ENCODE measurements at regions of chr10 and their contacts with region 1.

Region 1: DNA sequence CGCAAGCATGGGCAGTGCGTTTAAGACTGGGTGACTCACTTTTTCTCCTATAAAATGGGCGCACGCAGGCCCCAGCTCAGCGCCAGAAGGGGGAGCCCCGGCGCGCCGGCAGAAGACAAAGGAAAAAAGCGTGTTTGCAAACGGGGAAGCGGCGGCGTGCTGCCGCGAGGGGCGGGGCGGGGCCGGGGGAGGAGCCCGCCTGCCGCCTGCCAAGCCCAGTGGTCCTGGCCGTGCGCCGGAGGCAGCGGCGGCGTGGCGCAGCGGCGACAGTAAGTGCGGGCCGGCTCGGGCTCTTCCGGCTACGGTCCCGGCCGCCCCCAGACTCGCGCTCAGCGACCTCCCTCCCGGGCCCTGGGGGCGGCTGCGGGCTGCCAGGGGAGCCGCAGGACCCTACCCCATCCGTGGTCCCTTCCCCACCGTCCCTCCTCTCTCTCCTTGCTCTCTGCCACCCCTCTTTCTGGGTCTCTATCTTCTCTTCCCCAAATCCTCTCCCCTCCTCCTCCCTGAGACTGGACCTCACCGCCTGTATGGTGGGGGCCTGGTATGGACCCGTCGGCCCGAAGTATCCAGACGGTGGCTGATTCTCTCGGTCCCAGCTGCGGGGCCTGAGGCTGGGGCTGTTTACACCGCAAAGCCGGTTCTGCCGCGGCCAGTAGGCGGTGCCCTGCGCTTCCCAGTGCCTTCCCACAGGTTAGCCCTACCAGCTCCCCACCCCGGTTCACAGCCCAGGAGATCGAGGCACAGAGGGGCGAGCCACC is at the start of gene SLC29A3:
- DNase-seq: peak; percentile 69 to 92 (median 80)
- ATAC-seq: peak; percentile 87
- H3K4me3 ChIP-seq: peak within 1 kb of the TSS; percentile 83 to 91
- H3K4me3 Mint-ChIP-seq: peak within 1 kb of the TSS; percentile 92
- H3K27ac ChIP-seq: peak within 1 kb of the TSS; percentile 58 to 61
- H3K27ac Mint-ChIP-seq: peak within 1 kb of the TSS; percentile 80
- H3K4me1 ChIP-seq: peaks cover 18% of the 10 kb centered on the region
- H3K4me1 Mint-ChIP-seq: peaks cover 45% of the 10 kb centered on the region
- H3K27me3 ChIP-seq: no peaks in the 10 kb centered on the region
- H3K27me3 Mint-ChIP-seq: no peaks in the 10 kb centered on the region
- CTCF ChIP-seq: peak; percentile 38
- total RNA-seq, gene SLC29A3: 1.4 to 2.9 TPM

Region 2: GRCh38 chr10:71302874-71303568 is 16.2 kb before region 1 on chr10:
- CTCF ChIA-PET with region 1: interaction called, 39 read pairs
- POLR2A ChIA-PET with region 1: no interaction called
- intact Hi-C with region 1: no loop called
- DNase-seq: peak in 2 of 9 experiments; percentile 49 to 59
- ATAC-seq: peak; percentile 38
- H3K4me3 ChIP-seq: no peak overlapping the region
- H3K4me3 Mint-ChIP-seq: no peak overlapping the region
- H3K27ac ChIP-seq: no peak overlapping the region
- H3K27ac Mint-ChIP-seq: no peak overlapping the region
- H3K4me1 ChIP-seq: no peaks in the 10 kb centered on the region
- H3K4me1 Mint-ChIP-seq: peaks cover 2% of the 10 kb centered on the region
- H3K27me3 ChIP-seq: no peaks in the 10 kb centered on the region
- H3K27me3 Mint-ChIP-seq: peaks cover 9% of the 10 kb centered on the region
- CTCF ChIP-seq: peak; percentile 39

Region 3: DNA sequence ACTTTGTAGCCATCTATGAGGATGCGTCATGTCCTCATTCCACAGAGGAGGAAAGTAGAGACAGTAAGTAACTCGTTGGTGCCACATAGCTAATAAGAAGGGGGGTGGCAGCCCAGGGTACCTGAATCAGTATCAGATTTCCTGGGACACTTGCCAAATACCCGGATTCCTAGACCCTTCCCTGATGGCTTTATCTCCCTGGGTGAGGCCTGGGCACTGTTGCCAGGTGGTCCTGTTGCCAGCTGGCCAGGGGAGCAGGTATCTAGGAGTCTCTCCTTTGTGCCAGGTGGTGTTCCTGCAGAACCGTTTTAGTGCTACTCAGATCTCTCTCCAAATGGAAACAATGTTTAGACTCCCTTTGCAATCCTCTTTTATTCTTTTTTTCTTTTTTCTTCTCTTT is 12.5 kb after region 1 on chr10:
- CTCF ChIA-PET with region 1: interaction called, 13 read pairs
- POLR2A ChIA-PET with region 1: interaction called, 3 read pairs
- intact Hi-C with region 1: no loop called
- DNase-seq: no peak
- ATAC-seq: no peak
- H3K4me3 ChIP-seq: no peak overlapping the region
- H3K4me3 Mint-ChIP-seq: no peak overlapping the region
- H3K27ac ChIP-seq: no peak overlapping the region
- H3K27ac Mint-ChIP-seq: no peak overlapping the region
- H3K4me1 ChIP-seq: no peaks in the 10 kb centered on the region
- H3K4me1 Mint-ChIP-seq: peaks cover 4% of the 10 kb centered on the region
- H3K27me3 ChIP-seq: no peaks in the 10 kb centered on the region
- H3K27me3 Mint-ChIP-seq: no peaks in the 10 kb centered on the region
- CTCF ChIP-seq: no peak

Region 4: GRCh38 chr10:71372882-71373495 is 53.8 kb after region 1 on chr10:
- CTCF ChIA-PET with region 1: interaction called, 5 read pairs
- POLR2A ChIA-PET with region 1: interaction called, 9 read pairs
- intact Hi-C with region 1: loop called (anchors 1 kb)
- DNase-seq: no peak
- ATAC-seq: no peak
- H3K4me3 ChIP-seq: no peak overlapping the region
- H3K4me3 Mint-ChIP-seq: no peak overlapping the region
- H3K27ac ChIP-seq: no peak overlapping the region
- H3K27ac Mint-ChIP-seq: no peak overlapping the region
- H3K4me1 ChIP-seq: peaks cover 6% of the 10 kb centered on the region
- H3K4me1 Mint-ChIP-seq: peaks cover 9% of the 10 kb centered on the region
- H3K27me3 ChIP-seq: no peaks in the 10 kb centered on the region
- H3K27me3 Mint-ChIP-seq: peaks cover 8% of the 10 kb centered on the region
- CTCF ChIP-seq: no peak